MCF 10A (cell line): ENCODE measurements at regions of chr11 and their contacts with region 1.

Region 1: DNA sequence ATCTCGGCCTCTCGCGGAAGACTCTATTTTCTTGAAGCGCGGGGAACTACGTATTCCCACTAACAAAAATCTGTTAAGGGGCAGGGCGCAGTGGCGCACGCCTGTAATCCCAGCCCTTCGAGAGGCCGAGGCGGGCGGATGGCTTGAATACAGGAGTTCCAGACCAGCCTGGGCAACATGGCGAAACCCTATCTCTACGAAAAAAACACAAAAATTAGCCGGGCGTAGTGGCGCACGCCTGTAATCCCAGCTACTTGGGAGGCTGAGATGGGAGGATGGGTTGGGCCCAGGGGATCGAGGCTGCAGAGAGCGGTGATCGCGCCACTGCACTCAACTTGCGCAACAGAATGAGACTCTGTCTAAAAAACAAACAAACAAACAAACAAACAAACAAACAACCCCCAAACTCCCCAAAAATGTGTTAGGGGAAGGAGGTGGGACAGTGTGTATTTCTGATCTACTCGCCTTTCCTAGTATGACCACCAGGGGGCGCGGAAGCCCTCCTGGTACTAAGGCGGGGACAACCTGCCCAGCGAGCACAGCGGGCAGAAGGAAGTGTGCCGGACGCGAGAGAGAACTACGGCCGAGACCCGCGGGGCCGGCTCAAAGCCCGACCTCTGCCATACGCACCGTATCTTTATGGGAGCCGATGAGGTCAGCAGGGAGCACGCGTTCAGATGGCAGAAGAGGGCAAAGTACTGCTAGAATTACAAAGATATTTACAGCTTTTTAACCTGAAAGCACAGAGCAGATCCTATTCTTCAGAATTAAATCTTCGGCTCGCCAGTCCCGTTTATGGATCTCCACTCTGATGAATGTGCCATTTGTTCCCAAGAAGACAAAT is 1.3 kb upstream of the STX3 start:
- DNase-seq: peak; percentile 83
- H3K4me3 Mint-ChIP-seq: peak overlapping the region; percentile 92
- H3K27ac Mint-ChIP-seq: peak overlapping the region; percentile 51
- H3K4me1 Mint-ChIP-seq: peaks cover 13% of the 10 kb centered on the region
- H3K27me3 Mint-ChIP-seq: no peaks in the 10 kb centered on the region
- CTCF ChIP-seq: peak; percentile 82

Region 2: GRCh38 chr11:59560702-59561469 is 193.0 kb before region 1 on chr11:
- CTCF ChIA-PET with region 1: no interaction called
- POLR2A ChIA-PET with region 1: interaction called, 14 read pairs
- intact Hi-C with region 1: no loop called
- DNase-seq: peak; percentile 88
- H3K4me3 Mint-ChIP-seq: peak overlapping the region; percentile 78
- H3K27ac Mint-ChIP-seq: peak overlapping the region; percentile 99
- H3K4me1 Mint-ChIP-seq: peaks cover 13% of the 10 kb centered on the region
- H3K27me3 Mint-ChIP-seq: no peaks in the 10 kb centered on the region
- CTCF ChIP-seq: no peak

Region 3: DNA sequence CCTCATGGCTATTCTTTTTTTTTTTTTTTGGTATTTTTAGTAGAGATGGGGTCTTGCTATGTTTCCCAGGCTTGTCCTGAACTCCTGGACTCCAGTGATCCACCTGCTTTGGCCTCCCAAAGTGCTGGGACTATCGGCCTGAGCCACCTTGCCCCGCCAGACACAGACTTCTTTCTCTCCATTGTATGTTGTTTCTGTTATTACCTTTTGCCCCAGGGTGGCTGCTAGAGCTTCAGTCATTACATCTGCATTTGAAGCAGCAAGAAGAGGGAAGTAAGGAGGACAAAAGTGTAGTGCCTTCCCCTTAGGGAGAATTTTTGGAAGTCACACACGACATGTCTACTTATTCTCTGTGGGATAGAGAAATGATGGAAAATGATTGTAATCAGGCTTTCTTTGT is 128.2 kb before region 1 on chr11:
- CTCF ChIA-PET with region 1: no interaction called
- POLR2A ChIA-PET with region 1: no interaction called
- intact Hi-C with region 1: no loop called
- DNase-seq: no peak
- H3K4me3 Mint-ChIP-seq: no peak overlapping the region
- H3K27ac Mint-ChIP-seq: no peak overlapping the region
- H3K4me1 Mint-ChIP-seq: no peaks in the 10 kb centered on the region
- H3K27me3 Mint-ChIP-seq: no peaks in the 10 kb centered on the region
- CTCF ChIP-seq: no peak

Region 4: GRCh38 chr11:59668950-59669610 is 84.8 kb before region 1 on chr11 and contains the start of gene PATL1:
- CTCF ChIA-PET with region 1: interaction called, 16 read pairs
- POLR2A ChIA-PET with region 1: interaction called, 44 read pairs
- intact Hi-C with region 1: loop called (anchors 2 kb)
- DNase-seq: peak; percentile 98
- H3K4me3 Mint-ChIP-seq: peak within 1 kb of the TSS; percentile 95
- H3K27ac Mint-ChIP-seq: peak within 1 kb of the TSS; percentile 98
- H3K4me1 Mint-ChIP-seq: peaks cover 27% of the 10 kb centered on the region
- H3K27me3 Mint-ChIP-seq: no peaks in the 10 kb centered on the region
- CTCF ChIP-seq: no peak
- total RNA-seq, gene PATL1: 42.6 and 49.6 TPM in 2 replicates

Region 5: DNA sequence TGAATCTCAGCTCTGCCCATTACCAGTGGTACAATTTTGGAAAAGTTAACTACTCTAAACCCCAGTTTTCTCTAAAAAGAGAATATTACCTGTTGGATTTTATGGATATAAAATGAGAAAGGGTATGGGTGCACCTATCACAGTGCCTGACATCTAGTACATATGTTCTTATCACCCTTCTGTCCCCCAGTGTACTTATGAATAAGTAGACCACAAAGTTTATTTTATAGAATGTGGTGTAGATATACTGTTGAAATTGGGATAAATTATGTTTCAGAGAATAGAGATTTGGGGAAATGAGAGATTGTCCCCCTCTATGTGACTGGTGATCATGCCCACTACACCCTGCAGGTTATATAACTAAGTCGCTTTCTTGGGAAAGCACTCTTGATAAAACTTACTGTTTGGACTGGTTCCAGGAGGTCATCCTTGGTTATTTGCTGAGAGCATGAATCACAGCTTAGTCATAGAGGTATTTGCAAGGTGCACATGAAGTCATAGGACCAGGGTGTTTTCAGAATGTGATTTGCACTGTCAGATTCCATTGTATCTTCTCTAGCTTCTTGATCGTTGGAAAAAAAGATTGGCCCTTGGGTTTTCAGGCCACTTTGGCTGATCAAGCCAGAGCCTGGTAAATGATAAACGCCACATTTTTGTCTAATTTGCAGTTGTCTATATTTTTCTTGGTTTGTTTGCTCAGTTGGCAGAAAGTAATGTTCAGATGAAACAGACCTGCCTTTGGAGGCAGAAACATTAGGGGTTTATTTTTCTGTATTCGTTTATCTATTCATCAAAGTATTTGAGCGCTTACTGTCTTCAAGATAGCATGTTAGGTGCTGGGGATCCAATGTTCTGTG is 22.6 kb after region 1 on chr11:
- CTCF ChIA-PET with region 1: interaction called, 19 read pairs
- POLR2A ChIA-PET with region 1: interaction called, 64 read pairs
- intact Hi-C with region 1: loop called (anchors 1 kb)
- DNase-seq: peak; percentile 94
- H3K4me3 Mint-ChIP-seq: no peak overlapping the region
- H3K27ac Mint-ChIP-seq: no peak overlapping the region
- H3K4me1 Mint-ChIP-seq: peaks cover 14% of the 10 kb centered on the region
- H3K27me3 Mint-ChIP-seq: no peaks in the 10 kb centered on the region
- CTCF ChIP-seq: no peak

Region 6: DNA sequence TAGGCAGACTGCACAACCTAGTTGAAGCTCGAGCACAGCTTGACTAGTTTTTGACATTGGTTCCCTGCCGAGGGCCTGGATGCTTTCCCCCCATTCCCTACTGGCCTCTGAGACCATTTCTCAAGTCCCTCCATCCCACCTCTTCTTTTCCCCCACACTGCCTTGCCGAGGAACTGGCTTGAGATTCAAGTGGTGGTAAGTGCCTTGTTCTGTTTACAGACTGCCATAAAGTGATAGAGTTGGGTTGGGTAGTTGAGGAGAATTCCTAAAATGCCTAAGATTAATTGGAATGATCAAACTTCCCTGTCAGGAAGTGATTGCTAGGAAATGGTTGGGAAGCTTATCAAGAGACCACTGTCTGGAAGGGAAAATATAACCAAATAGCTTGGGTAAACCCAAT is 40.5 kb after region 1 on chr11:
- CTCF ChIA-PET with region 1: interaction called, 160 read pairs
- POLR2A ChIA-PET with region 1: interaction called, 59 read pairs
- intact Hi-C with region 1: no loop called
- DNase-seq: no peak
- H3K4me3 Mint-ChIP-seq: no peak overlapping the region
- H3K27ac Mint-ChIP-seq: no peak overlapping the region
- H3K4me1 Mint-ChIP-seq: no peaks in the 10 kb centered on the region
- H3K27me3 Mint-ChIP-seq: no peaks in the 10 kb centered on the region
- CTCF ChIP-seq: no peak

Region 7: GRCh38 chr11:59810189-59810910 is 56.5 kb after region 1 on chr11 and contains the start of gene MRPL16:
- CTCF ChIA-PET with region 1: interaction called, 160 read pairs
- POLR2A ChIA-PET with region 1: interaction called, 67 read pairs
- intact Hi-C with region 1: loop called (anchors 2 kb)
- DNase-seq: peak; percentile 90
- H3K4me3 Mint-ChIP-seq: peak within 1 kb of the TSS; percentile 90
- H3K27ac Mint-ChIP-seq: peak within 1 kb of the TSS; percentile 93
- H3K4me1 Mint-ChIP-seq: no peaks in the 10 kb centered on the region
- H3K27me3 Mint-ChIP-seq: no peaks in the 10 kb centered on the region
- CTCF ChIP-seq: no peak
- total RNA-seq, gene MRPL16: 31.8 and 39.8 TPM in 2 replicates

Region 8: DNA sequence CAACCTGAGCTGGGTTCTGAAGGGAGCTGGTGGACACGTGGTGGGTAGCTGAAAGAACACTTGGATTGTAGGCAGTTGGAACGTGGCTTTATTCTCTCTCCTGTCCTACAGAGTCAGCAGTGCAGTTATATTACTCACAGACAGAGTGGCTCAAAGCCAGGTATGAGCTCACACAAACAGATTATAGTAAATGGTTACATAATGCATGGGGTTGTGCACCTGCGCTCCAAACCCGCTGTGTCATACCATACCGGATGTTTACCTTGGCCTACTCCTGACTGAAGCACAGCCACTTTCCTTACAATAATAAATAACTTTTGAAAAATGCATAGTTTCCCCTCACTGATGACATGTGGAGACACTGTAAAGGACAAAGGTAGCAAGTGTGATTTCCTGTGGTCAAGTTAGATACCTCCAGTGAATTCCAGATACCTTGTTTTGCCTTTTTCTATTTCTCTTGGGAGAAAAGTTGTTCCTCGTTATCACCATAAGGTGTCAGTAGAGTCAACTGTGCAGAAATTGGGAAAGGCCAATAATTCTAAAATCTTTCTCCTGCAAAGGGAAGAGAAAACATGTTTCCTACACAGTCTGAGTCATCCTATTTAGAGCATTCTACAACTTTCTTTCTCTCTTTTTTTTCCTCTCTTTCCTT is 415.5 kb after region 1 on chr11:
- CTCF ChIA-PET with region 1: no interaction called
- POLR2A ChIA-PET with region 1: no interaction called
- intact Hi-C with region 1: loop called (anchors 10 kb)
- DNase-seq: peak; percentile 98
- H3K4me3 Mint-ChIP-seq: no peak overlapping the region
- H3K27ac Mint-ChIP-seq: peak overlapping the region; percentile 80
- H3K4me1 Mint-ChIP-seq: peaks cover 22% of the 10 kb centered on the region
- H3K27me3 Mint-ChIP-seq: no peaks in the 10 kb centered on the region
- CTCF ChIP-seq: peak; percentile 76